ENCODE measurements at regions of chr1 and their contacts with region 1.

Region 1: GRCh38 chr1:22673486-22674409 is 20.7 kb downstream of the C1QB start:
- DNase-seq: peak; percentile 39
- H3K4me3 ChIP-seq: no peak overlapping the region
- H3K27ac ChIP-seq: no peak overlapping the region
- H3K27me3 ChIP-seq: peaks cover 30% of the 10 kb centered on the region
- CTCF ChIP-seq: peak; percentile 91

Region 2: DNA sequence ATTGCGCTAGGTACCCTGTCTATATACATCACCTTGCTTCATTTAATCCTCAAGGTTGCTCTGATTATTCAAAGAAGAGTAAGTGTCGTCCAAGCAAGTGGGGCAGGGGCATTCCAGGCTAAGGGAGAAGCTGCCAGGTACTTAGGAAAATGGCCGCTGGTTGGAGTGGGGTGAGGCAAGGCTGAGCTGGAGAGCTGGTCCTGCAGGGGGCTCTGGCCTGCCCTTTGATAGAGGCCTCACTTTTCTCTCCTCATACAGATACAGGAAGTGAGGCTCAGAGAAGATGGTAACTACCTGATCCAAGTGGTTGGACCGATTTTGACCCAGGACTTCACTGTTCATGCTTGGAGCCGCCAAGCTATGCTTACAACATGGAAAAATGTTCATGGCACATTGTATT is 309.0 kb before region 1 on chr1:
- CTCF ChIA-PET with region 1: no interaction called
- POLR2A ChIA-PET with region 1: no interaction called
- DNase-seq: no peak
- H3K4me3 ChIP-seq: no peak overlapping the region
- H3K27ac ChIP-seq: no peak overlapping the region
- H3K27me3 ChIP-seq: peaks cover 31% of the 10 kb centered on the region
- CTCF ChIP-seq: no peak

Region 3: GRCh38 chr1:22451702-22452474 is 221.9 kb before region 1 on chr1 and contains the start of gene ZBTB40:
- CTCF ChIA-PET with region 1: no interaction called
- POLR2A ChIA-PET with region 1: no interaction called
- DNase-seq: peak; percentile 91
- H3K4me3 ChIP-seq: peak within 1 kb of the TSS; percentile 84
- H3K27ac ChIP-seq: peak within 1 kb of the TSS; percentile 79
- H3K27me3 ChIP-seq: no peaks in the 10 kb centered on the region
- CTCF ChIP-seq: no peak
- polyA plus RNA-seq, gene ZBTB40: 5.9 and 6.8 TPM in 2 replicates

Region 4: GRCh38 chr1:22600071-22600816 is 73.5 kb before region 1 on chr1:
- CTCF ChIA-PET with region 1: no interaction called
- POLR2A ChIA-PET with region 1: no interaction called
- DNase-seq: no peak
- H3K4me3 ChIP-seq: no peak overlapping the region
- H3K27ac ChIP-seq: no peak overlapping the region
- H3K27me3 ChIP-seq: peaks cover 35% of the 10 kb centered on the region
- CTCF ChIP-seq: no peak

Region 5: GRCh38 chr1:22930235-22930912 is 256.6 kb after region 1 on chr1:
- CTCF ChIA-PET with region 1: interaction called, 85 read pairs
- POLR2A ChIA-PET with region 1: no interaction called
- DNase-seq: no peak
- H3K4me3 ChIP-seq: no peak overlapping the region
- H3K27ac ChIP-seq: no peak overlapping the region
- H3K27me3 ChIP-seq: peaks cover 12% of the 10 kb centered on the region
- CTCF ChIP-seq: peak; percentile 85

Region 6: GRCh38 chr1:22963044-22963677 is 289.4 kb after region 1 on chr1:
- CTCF ChIA-PET with region 1: interaction called, 11 read pairs
- POLR2A ChIA-PET with region 1: no interaction called
- DNase-seq: no peak
- H3K4me3 ChIP-seq: no peak overlapping the region
- H3K27ac ChIP-seq: no peak overlapping the region
- H3K27me3 ChIP-seq: peaks cover 35% of the 10 kb centered on the region
- CTCF ChIP-seq: no peak

Region 7: DNA sequence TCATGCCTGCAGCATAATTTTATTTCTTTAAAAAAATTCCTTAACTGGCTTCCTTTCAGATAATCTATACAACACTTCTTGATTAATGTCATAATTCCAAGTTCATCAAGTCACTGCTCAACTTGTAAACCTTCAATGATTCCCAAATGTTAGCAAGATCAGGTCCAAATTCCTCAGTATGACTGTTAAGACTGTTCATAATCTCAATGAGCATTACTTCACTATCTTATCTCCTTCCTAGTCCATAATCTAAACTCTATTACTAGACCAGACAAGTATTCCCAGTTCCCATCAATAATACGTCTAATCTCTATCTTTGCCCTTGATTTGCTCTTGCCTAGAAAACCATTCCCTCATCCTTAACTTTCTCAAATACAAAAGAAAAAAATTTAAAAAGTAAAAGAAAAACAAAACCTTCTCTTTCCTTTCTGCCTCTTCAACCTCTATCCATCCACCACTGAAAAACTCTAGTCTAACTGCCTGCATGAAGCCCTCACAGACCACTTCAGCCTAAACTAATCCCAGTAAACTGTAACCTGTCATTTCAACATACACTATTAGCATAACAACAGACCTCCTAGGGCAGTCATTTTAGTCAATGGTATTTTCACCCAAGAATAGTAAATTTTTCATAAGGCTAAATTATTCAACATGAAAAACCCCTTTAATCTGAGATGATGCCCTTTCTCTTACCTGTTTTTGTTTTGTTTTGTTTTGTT is 479.4 kb after region 1 on chr1:
- CTCF ChIA-PET with region 1: no interaction called
- POLR2A ChIA-PET with region 1: no interaction called
- DNase-seq: no peak
- H3K4me3 ChIP-seq: no peak overlapping the region
- H3K27ac ChIP-seq: no peak overlapping the region
- H3K27me3 ChIP-seq: no peaks in the 10 kb centered on the region
- CTCF ChIP-seq: no peak